K562 (cell line): ENCODE measurements at regions of chr1 and their contacts with region 1.

Region 1: GRCh38 chr1:109379422-109379821 is 18.3 kb downstream of the SORT1 start:
- DNase-seq: no peak
- ATAC-seq: 0 out of 3 replicates have a peak, but pooled peaks have one; percentile 10
- H3K4me3 ChIP-seq: no peak overlapping the region
- H3K27ac ChIP-seq: peak overlapping the region; percentile 24; the same call in 2 of the 3 replicates
- H3K4me1 ChIP-seq: peaks cover 11 to 31% of the 10 kb centered on the region in 2 experiments; a peak in 4 of 5 replicates
- H3K27me3 ChIP-seq: no peaks in the 10 kb centered on the region
- CTCF ChIP-seq: no peak
- EP300 ChIP-seq: no peak
- POLR2A ChIP-seq: no peak
- RAD21 ChIP-seq: no peak

Region 2: DNA sequence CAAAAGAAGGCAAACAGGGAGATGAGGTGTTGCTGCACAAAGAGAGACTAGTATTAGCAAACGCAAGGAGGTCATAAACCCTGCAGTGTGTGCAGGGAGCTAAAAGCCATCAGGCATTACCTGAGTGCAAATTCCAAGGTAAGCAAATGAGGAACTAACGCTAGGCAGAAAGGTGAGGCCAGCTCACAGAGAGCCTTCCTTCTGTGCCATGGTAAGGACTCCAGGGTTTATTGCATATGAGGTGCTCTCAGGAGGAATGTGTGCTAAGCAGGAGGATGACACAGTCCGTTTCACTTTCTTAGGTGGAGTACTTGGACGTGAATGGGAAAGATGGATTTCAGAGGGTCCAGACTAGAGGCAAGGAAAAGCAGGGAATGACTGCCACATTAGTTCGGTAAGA is 28.0 kb before region 1 on chr1:
- CTCF ChIA-PET with region 1: no interaction called
- POLR2A ChIA-PET with region 1: interaction called, 14 read pairs
- in situ Hi-C with region 1: no loop called
- intact Hi-C with region 1: no loop called
- DNase-seq: no peak
- ATAC-seq: no peak
- H3K4me3 ChIP-seq: no peak overlapping the region
- H3K27ac ChIP-seq: no peak overlapping the region; the same call in 2 of the 3 replicates
- H3K4me1 ChIP-seq: no peaks in the 10 kb centered on the region; a peak in 1 of 5 replicates
- H3K27me3 ChIP-seq: no peaks in the 10 kb centered on the region
- CTCF ChIP-seq: no peak
- EP300 ChIP-seq: no peak
- POLR2A ChIP-seq: no peak
- RAD21 ChIP-seq: no peak

Region 3: GRCh38 chr1:109391626-109392025 is 12.2 kb after region 1 on chr1:
- CTCF ChIA-PET with region 1: no interaction called
- POLR2A ChIA-PET with region 1: interaction called, 35 read pairs
- in situ Hi-C with region 1: no loop called
- intact Hi-C with region 1: no loop called
- DNase-seq: no peak
- ATAC-seq: no peak
- H3K4me3 ChIP-seq: peak overlapping the region; percentile 35
- H3K27ac ChIP-seq: peak overlapping the region; percentile 92
- H3K4me1 ChIP-seq: peaks cover 36 to 79% of the 10 kb centered on the region in 2 experiments
- H3K27me3 ChIP-seq: no peaks in the 10 kb centered on the region
- CTCF ChIP-seq: no peak
- EP300 ChIP-seq: no peak
- POLR2A ChIP-seq: no peak
- RAD21 ChIP-seq: no peak

Region 4: DNA sequence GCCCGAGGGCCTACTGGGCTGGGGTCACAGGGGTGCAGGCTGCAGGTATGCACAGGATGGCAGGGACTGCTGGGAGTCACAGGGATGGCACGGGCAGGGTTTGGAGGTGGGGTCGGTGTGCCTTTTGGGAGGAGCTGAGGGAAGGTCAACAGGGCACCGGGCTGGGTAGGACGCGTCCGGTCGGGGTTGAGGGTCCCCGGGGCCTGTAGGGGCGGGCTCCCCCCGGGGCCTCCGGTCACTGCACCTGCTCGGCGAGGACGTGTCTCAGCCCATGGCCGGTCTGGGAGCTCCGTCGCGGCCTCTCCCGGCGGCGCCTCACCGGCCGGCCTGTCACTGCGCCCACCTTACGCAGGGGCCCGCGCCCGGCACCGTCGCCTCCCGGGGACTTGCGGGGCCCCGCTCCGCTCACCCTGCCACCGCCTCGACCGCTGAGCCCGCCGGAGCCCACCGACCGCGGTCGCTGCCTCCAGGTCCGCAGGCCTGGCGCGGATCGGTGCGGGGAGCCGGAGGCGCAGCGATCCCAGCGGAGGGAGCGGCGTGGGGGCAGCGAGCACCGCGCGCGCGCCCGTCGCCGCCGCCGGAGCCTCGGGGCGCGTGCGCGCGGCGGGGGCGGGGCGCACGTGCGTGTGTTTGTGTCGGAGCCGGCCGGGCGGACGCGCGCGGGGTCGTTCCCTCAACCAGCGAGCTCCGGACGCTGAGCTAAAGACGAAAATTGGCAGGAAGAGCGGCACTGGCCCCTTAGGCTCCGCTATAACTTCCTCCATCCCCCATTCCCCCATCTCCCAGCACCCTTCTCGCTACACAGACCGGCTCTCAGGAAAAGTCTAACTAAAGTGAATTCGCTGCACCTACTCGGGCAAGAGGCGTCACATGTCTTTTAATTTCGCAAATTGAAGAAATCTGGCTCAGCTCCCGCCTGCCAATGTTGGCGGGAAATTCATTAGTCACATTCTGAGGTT is 130.0 kb after region 1 on chr1 and contains the start of gene AMIGO1:
- CTCF ChIA-PET with region 1: no interaction called
- POLR2A ChIA-PET with region 1: no interaction called
- in situ Hi-C with region 1: no loop called
- intact Hi-C with region 1: no loop called
- DNase-seq: peak; percentile 75 to 96 (median 92)
- ATAC-seq: peak; percentile 77
- H3K4me3 ChIP-seq: peak within 1 kb of the TSS; percentile 48
- H3K27ac ChIP-seq: no peak within 1 kb of the TSS
- H3K4me1 ChIP-seq: peaks cover 0 to 19% of the 10 kb centered on the region in 2 experiments; a peak in 4 of 5 replicates
- H3K27me3 ChIP-seq: peaks cover 13 to 45% of the 10 kb centered on the region in 2 experiments
- CTCF ChIP-seq: no peak
- EP300 ChIP-seq: no peak
- POLR2A ChIP-seq: no peak
- RAD21 ChIP-seq: no peak
- polyA plus RNA-seq, gene AMIGO1: 0.24 to 0.31 TPM